A673 (cell line): ENCODE measurements at regions of chr18 and their contacts with region 1.

Region 1: DNA sequence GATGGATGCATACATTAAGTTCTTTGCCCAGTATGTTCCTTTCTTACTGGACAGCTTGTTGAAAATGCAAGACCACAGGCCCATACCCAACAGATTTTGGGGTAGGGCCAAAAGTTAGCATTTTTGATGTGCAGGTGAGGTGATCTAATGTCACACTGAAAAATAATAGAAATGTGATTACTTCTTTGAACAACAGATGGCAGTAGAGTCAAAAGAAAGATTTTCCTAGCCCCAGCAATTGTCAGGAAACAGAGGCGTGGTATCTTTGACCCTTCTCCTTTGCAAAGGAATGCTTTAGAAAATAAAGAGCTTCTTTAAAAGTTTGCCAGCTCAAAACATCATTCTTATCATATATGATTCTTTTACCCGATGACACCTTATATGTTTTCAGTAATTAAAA is 343.6 kb upstream of the SYT4 start:
- DNase-seq: peak; percentile 69
- H3K4me3 ChIP-seq: no peak overlapping the region
- H3K27ac ChIP-seq: no peak overlapping the region
- H3K4me1 ChIP-seq: peaks cover 26% of the 10 kb centered on the region
- H3K27me3 ChIP-seq: no peaks in the 10 kb centered on the region
- CTCF ChIP-seq: peak; percentile 66

Region 2: GRCh38 chr18:43757273-43757672 is 136.3 kb after region 1 on chr18:
- CTCF ChIA-PET with region 1: no interaction called
- POLR2A ChIA-PET with region 1: no interaction called
- intact Hi-C with region 1: no loop called
- DNase-seq: no peak
- H3K4me3 ChIP-seq: no peak overlapping the region
- H3K27ac ChIP-seq: no peak overlapping the region
- H3K4me1 ChIP-seq: no peaks in the 10 kb centered on the region
- H3K27me3 ChIP-seq: no peaks in the 10 kb centered on the region
- CTCF ChIP-seq: no peak

Region 3: GRCh38 chr18:43961722-43962121 is 340.8 kb after region 1 on chr18:
- CTCF ChIA-PET with region 1: no interaction called
- POLR2A ChIA-PET with region 1: no interaction called
- intact Hi-C with region 1: loop called (anchors 10 kb)
- DNase-seq: no peak
- H3K4me3 ChIP-seq: no peak overlapping the region
- H3K27ac ChIP-seq: no peak overlapping the region
- H3K4me1 ChIP-seq: no peaks in the 10 kb centered on the region
- H3K27me3 ChIP-seq: no peaks in the 10 kb centered on the region
- CTCF ChIP-seq: no peak

Region 4: DNA sequence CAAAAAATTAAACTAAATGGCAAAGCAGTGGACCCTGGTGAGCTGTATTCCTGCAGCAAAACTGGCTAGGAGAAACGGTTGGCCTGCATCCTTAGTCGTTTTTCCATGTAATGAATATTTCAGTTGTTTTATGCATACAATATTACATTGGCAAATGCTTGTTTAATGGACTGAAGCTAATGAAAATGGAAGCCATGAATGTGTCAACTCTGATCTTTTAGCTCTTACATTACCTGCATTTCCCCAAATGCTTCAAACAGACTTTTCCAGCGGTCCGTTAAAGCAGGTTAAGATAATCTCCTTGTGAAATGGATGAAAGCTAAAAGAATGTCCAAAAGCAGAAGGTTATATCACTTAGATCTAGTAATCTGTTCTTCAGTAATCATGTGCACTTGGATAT is 373.4 kb after region 1 on chr18:
- CTCF ChIA-PET with region 1: no interaction called
- POLR2A ChIA-PET with region 1: no interaction called
- intact Hi-C with region 1: no loop called
- DNase-seq: no peak
- H3K4me3 ChIP-seq: no peak overlapping the region
- H3K27ac ChIP-seq: no peak overlapping the region
- H3K4me1 ChIP-seq: no peaks in the 10 kb centered on the region
- H3K27me3 ChIP-seq: no peaks in the 10 kb centered on the region
- CTCF ChIP-seq: no peak

Region 5: DNA sequence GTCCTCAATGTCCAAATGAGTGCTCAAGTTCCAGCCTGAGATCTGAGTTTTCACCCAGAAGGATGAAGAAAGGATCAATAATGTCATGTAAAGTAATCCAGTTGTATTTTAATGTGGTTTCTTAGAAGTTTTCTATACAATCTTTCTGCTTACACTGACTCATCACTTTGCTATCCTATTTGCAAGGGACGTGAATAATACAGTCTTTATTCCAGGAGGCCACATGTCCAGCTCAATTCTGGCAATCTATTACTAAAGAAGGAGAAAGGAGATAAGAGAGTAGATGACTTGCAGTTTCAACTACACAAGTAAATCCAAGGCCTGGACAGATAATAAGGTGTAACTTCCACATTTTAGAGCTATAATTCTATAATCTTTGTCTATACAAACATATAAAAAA is 458.7 kb after region 1 on chr18:
- CTCF ChIA-PET with region 1: no interaction called
- POLR2A ChIA-PET with region 1: no interaction called
- intact Hi-C with region 1: loop called (anchors 10 kb)
- DNase-seq: peak; percentile 6
- H3K4me3 ChIP-seq: no peak overlapping the region
- H3K27ac ChIP-seq: no peak overlapping the region
- H3K4me1 ChIP-seq: no peaks in the 10 kb centered on the region
- H3K27me3 ChIP-seq: no peaks in the 10 kb centered on the region
- CTCF ChIP-seq: no peak

Region 6: GRCh38 chr18:44130376-44130942 is 509.5 kb after region 1 on chr18:
- CTCF ChIA-PET with region 1: no interaction called
- POLR2A ChIA-PET with region 1: no interaction called
- intact Hi-C with region 1: loop called (anchors 10 kb)
- DNase-seq: peak; percentile 64
- H3K4me3 ChIP-seq: no peak overlapping the region
- H3K27ac ChIP-seq: no peak overlapping the region
- H3K4me1 ChIP-seq: no peaks in the 10 kb centered on the region
- H3K27me3 ChIP-seq: no peaks in the 10 kb centered on the region
- CTCF ChIP-seq: peak; percentile 74

Region 7: GRCh38 chr18:44325903-44326635 is 705.1 kb after region 1 on chr18:
- CTCF ChIA-PET with region 1: no interaction called
- POLR2A ChIA-PET with region 1: no interaction called
- intact Hi-C with region 1: loop called (anchors 5 kb)
- DNase-seq: peak; percentile 65
- H3K4me3 ChIP-seq: no peak overlapping the region
- H3K27ac ChIP-seq: no peak overlapping the region
- H3K4me1 ChIP-seq: no peaks in the 10 kb centered on the region
- H3K27me3 ChIP-seq: no peaks in the 10 kb centered on the region
- CTCF ChIP-seq: peak; percentile 70

Region 8: DNA sequence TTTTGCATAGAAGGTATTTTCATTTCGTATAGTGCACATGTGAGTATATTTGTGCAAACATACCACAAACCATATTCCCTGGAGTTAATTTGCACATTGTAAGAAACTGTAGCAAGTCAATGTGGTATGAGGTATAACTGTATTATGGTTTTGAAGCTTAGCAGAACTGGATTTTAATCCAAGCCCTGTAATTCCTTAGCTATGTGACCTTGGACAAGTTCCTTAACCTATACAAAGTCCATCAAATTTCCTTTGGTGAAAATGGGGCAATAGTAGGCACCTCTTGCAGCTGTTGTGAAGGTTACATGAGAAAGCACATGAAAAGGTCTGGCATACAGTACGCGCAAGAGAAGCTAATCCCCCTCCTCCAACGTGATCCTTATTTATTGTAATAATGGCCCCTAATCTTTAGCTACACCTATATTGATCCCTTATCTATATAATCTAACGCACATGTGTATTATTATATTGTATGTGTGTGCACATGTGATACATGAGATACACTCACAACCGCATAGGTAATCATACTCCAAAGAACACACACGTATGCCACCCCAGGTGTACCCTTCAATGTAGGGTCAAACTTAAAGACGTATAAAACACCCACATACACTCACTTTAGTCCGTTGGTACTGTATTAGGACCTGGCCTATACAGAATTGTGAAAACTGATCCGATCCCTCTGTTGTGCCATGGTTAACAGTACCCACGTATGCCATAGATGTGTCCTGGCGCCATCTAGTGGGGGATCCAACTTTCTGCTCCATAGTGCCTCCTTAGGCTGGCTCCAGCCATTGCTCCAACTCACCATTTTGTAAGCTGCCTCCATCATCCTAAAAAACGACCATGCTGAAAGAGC is 1591.5 kb after region 1 on chr18:
- CTCF ChIA-PET with region 1: no interaction called
- POLR2A ChIA-PET with region 1: no interaction called
- intact Hi-C with region 1: loop called (anchors 5 kb)
- DNase-seq: peak; percentile 87
- H3K4me3 ChIP-seq: no peak overlapping the region
- H3K27ac ChIP-seq: no peak overlapping the region
- H3K4me1 ChIP-seq: no peaks in the 10 kb centered on the region
- H3K27me3 ChIP-seq: no peaks in the 10 kb centered on the region
- CTCF ChIP-seq: peak; percentile 99

Region 9: GRCh38 chr18:45384137-45384961 is 1763.4 kb after region 1 on chr18:
- CTCF ChIA-PET with region 1: interaction called, 8 read pairs
- POLR2A ChIA-PET with region 1: no interaction called
- intact Hi-C with region 1: loop called (anchors 1 kb)
- DNase-seq: peak; percentile 60
- H3K4me3 ChIP-seq: no peak overlapping the region
- H3K27ac ChIP-seq: no peak overlapping the region
- H3K4me1 ChIP-seq: no peaks in the 10 kb centered on the region
- H3K27me3 ChIP-seq: peaks cover 9% of the 10 kb centered on the region
- CTCF ChIP-seq: peak; percentile 78